Mammary epithelial cell (primary cell): ENCODE measurements at regions of chr1 and their contacts with region 1.

Region 1: DNA sequence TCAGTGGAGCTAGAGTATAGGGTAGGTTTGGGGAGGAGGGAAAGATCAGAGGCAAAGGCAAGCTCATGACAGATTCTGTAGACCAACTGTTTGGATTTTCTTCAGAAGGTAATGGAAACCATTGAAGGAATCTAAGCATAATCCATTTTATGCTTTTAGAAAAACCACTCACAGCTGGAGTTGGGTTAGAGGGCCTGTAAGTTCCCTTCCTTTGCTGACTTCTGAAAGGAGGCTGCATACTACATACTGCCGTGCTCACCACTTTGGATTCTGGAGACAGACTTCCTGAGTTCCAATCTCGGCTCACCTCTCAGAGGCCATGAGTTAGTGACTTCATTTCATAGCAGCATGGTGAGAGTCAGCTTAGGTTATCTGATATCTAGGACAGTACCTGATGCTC is 6.4 kb upstream of the SYT2 start:
- DNase-seq: no peak
- H3K4me3 ChIP-seq: no peak overlapping the region
- H3K27ac ChIP-seq: no peak overlapping the region
- H3K4me1 ChIP-seq: no peaks in the 10 kb centered on the region
- H3K27me3 ChIP-seq: peaks cover 3% of the 10 kb centered on the region
- CTCF ChIP-seq: no peak

Region 2: GRCh38 chr1:202315576-202316168 is 401.0 kb before region 1 on chr1:
- CTCF ChIA-PET with region 1: no interaction called
- dilution Hi-C with region 1: no loop called
- in situ Hi-C with region 1: no loop called
- intact Hi-C with region 1: loop called (anchors 1 kb)
- DNase-seq: peak; percentile 44
- H3K4me3 ChIP-seq: no peak overlapping the region
- H3K27ac ChIP-seq: no peak overlapping the region
- H3K4me1 ChIP-seq: peaks cover 6% of the 10 kb centered on the region
- H3K27me3 ChIP-seq: no peaks in the 10 kb centered on the region
- CTCF ChIP-seq: peak; percentile 99

Region 3: DNA sequence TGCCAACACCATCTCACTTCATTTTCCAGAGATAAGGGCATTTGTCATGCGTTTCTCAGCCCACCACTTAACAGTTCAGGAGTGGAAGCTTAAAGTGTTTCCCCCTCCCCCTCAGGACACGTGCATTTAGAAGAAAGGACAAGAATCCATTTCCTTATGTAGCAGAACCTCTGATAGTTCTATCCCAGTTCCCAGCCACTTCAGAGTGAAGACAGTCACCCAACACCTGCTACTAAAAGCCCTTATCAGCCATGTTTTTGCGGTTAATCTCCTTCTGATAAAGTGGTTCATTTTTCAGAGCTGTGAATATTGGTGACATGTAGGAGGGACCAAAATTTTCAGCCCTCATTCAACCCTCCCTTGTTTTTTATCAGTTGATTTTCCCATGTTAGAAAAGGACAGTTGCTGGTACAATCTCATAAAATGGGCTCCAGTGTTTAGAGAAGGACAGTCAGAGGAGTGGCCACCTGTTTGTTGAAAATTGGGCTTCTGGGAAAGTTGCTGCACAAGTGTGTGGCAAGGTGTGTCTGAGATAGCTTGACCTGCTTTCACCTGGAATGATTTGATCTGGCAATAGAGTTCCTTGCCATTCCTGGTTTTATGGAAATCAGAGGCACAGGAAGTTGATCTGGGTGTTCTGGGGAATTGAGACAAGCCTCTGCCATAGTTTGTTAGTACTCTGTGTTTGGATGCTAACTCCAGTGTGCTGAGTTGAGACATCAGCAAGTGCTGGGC is 254.1 kb before region 1 on chr1:
- CTCF ChIA-PET with region 1: interaction called, 25 read pairs
- dilution Hi-C with region 1: no loop called
- in situ Hi-C with region 1: loop called in 1 of 2 experiments (anchors 10 kb)
- intact Hi-C with region 1: loop called (anchors 1 kb)
- DNase-seq: no peak
- H3K4me3 ChIP-seq: no peak overlapping the region
- H3K27ac ChIP-seq: no peak overlapping the region
- H3K4me1 ChIP-seq: peaks cover 7% of the 10 kb centered on the region
- H3K27me3 ChIP-seq: no peaks in the 10 kb centered on the region
- CTCF ChIP-seq: no peak

Region 4: GRCh38 chr1:202599677-202600431 is 116.8 kb before region 1 on chr1:
- CTCF ChIA-PET with region 1: no interaction called
- dilution Hi-C with region 1: no loop called
- in situ Hi-C with region 1: no loop called
- intact Hi-C with region 1: loop called (anchors 1 kb)
- DNase-seq: peak; percentile 69
- H3K4me3 ChIP-seq: no peak overlapping the region
- H3K27ac ChIP-seq: no peak overlapping the region
- H3K4me1 ChIP-seq: peaks cover 8% of the 10 kb centered on the region
- H3K27me3 ChIP-seq: no peaks in the 10 kb centered on the region
- CTCF ChIP-seq: peak; percentile 86 to 97

Region 5: DNA sequence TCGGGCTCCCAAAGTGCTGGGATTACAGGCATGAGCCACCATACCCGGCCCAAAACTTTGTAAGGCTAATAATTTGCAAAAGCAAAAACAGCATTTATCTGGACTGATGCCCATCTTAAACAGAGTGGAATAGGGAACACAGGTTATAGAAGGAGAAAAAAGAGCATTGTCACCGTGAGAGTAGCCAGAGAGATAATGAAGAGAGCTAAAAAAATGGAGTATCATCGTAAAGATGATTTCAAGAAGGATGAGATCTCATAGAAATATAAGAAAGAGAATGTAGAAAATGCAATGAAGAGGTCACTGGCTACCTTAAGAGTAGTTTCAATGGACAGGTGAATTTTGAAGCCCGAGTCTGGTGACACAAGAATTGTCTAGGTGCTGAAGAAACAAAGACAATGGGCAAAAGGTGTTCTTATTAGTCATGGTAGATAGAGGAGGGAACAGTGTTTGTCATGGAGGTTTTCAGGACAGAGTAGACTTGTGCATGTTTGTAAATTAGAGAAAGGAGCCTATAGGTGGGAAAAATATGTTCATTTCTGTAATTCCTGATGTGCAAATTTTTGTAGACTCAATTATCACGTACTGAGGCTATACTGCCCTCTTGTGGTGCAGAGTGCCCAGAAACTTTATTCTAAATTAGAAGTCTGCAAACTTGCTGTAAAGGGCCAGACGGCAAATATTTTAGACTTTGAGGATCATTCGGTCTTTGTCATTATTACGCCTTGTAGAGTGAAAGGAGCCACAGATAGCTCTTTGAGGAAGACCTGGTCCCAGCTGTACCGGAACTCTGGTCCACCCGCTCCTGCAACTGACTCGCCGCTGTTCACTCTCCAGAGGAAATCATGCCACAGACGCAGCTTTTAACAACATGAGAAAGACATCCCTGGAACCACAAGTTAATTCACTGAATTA is 282.4 kb after region 1 on chr1:
- CTCF ChIA-PET with region 1: no interaction called
- dilution Hi-C with region 1: no loop called
- in situ Hi-C with region 1: no loop called
- intact Hi-C with region 1: loop called (anchors 5 kb)
- DNase-seq: peak; percentile 28
- H3K4me3 ChIP-seq: no peak overlapping the region
- H3K27ac ChIP-seq: no peak overlapping the region
- H3K4me1 ChIP-seq: no peaks in the 10 kb centered on the region
- H3K27me3 ChIP-seq: no peaks in the 10 kb centered on the region
- CTCF ChIP-seq: peak; percentile 80 to 86